ENCODE measurements at regions of chr11 and their contacts with region 1.

Region 1: GRCh38 chr11:60899046-60899936 is 7.1 kb downstream of the PRPF19 start:
- DNase-seq: peak; percentile 51
- ATAC-seq: peak; percentile 95
- H3K4me3 ChIP-seq: no peak overlapping the region
- H3K27ac ChIP-seq: no peak overlapping the region; the same call in 1 of the 2 replicates
- H3K4me1 ChIP-seq: peaks cover 0 to 3% of the 10 kb centered on the region in 2 experiments; a peak in 1 of 4 replicates
- H3K27me3 ChIP-seq: no peaks in the 10 kb centered on the region
- CTCF ChIP-seq: peak; percentile 67 to 93 (median 93); a peak in 5 of 6 replicates
- POLR2A ChIP-seq: no peak
- RAD21 ChIP-seq: peak; percentile 52; the same call in 1 of the 2 replicates

Region 2: GRCh38 chr11:60887556-60887955 is 11.7 kb before region 1 on chr11:
- CTCF ChIA-PET with region 1: interaction called, 26 read pairs
- POLR2A ChIA-PET with region 1: no interaction called
- RAD21 ChIA-PET with region 1: no interaction called
- intact Hi-C with region 1: no loop called
- DNase-seq: peak; percentile 31
- ATAC-seq: peak; percentile 95
- H3K4me3 ChIP-seq: no peak overlapping the region
- H3K27ac ChIP-seq: no peak overlapping the region
- H3K4me1 ChIP-seq: no peaks in the 10 kb centered on the region
- H3K27me3 ChIP-seq: no peaks in the 10 kb centered on the region
- CTCF ChIP-seq: peak; percentile 61; a peak in 5 of 6 replicates
- POLR2A ChIP-seq: no peak
- RAD21 ChIP-seq: peak; percentile 78

Region 3: DNA sequence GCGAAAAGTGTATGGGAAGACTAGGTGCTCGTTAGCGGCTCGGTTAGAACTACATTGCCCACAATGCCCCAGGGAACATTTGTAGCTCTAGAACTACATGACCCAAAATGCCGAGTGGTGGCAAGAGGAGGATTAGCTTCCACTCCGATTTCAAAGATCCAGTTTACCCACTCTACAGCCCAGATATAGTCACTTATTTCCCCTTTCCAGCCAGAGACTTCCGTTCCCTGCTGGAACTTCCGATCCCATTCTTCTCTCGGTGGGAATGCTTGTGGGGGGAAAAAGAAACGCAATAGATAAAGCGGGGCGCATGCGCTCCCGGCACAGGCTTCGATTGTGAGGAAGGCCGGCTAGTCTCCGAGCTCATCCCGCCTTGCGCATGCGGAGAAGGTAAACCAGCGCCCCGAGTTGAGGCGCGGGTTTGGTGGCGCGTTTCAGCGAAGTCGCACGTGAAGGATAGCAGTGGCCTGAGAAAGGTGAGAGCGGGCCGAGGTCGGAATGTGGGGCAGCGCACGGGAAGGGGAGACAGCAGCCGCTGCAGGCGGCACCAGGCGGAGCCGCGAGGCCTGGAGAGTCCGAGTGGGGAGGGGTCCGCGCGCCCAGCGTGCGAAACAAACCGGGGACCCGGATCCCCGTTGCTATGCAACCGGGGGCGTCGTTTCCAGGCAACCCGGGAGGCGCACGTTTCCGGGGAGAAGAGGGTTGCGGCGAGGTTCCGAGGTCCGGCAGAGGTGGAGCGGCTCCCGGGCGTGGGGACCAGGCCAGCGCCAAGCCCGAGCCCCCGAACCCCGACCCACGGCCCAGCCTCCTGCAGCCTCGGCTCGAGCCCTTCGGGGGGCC is 14.7 kb after region 1 on chr11 and contains the start of gene TMEM109:
- CTCF ChIA-PET with region 1: interaction called, 16 read pairs
- POLR2A ChIA-PET with region 1: no interaction called
- RAD21 ChIA-PET with region 1: no interaction called
- intact Hi-C with region 1: no loop called
- DNase-seq: peak; percentile 73
- ATAC-seq: peak; percentile 77
- H3K4me3 ChIP-seq: peak within 1 kb of the TSS; percentile 61 to 67
- H3K27ac ChIP-seq: peak within 1 kb of the TSS; percentile 61
- H3K4me1 ChIP-seq: peaks cover 23 to 60% of the 10 kb centered on the region in 2 experiments
- H3K27me3 ChIP-seq: no peaks in the 10 kb centered on the region
- CTCF ChIP-seq: no peak
- POLR2A ChIP-seq: peak; percentile 44
- RAD21 ChIP-seq: no peak
- total RNA-seq, gene TMEM109: 44.4 TPM

Region 4: DNA sequence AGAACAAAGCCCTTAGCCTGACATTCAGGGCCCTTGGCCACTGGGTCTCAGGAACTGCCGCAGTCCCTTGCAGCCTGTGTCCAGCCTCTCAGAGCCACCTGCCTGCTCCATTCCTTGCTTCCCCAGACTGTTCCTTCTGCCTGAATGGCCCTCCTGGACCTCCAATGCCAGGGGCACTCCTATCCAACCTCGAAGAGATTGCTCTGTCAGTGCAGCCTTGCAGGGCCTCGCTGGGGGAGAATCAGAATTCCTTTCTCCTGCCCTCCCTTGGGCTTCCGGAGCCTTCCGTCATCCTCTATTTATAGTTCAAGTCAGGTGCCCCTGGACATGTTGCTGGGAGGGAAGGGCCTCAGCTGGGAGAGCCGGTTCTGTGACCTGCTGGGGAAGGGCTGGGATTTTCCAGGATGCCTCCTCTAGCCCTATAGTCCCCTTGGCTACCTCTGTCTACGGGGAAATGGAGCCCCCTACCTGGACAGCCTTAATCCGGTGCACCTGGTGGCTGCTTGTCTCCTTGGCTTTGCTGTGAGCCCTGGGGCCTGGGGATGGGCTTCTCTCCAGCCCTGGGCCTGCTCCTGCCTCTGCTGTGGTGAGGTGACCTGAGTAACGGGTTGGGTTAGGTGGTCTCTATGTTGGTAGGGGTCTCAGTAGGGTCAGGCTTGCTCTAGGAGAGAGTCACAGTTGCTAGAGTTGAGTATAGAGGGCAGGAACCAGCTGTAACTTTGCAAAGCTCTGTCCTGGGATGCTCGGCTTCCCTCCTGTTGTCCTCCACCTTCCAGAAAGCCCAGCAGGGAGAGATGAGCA is 727.5 kb after region 1 on chr11:
- CTCF ChIA-PET with region 1: no interaction called
- POLR2A ChIA-PET with region 1: no interaction called
- RAD21 ChIA-PET with region 1: no interaction called
- intact Hi-C with region 1: no loop called
- DNase-seq: no peak
- ATAC-seq: peak; percentile 48
- H3K4me3 ChIP-seq: peak overlapping the region in 1 of 2 experiments; percentile 26; a peak in 2 of 4 replicates
- H3K27ac ChIP-seq: peak overlapping the region; percentile 68
- H3K4me1 ChIP-seq: peaks cover 33 to 53% of the 10 kb centered on the region in 2 experiments
- H3K27me3 ChIP-seq: no peaks in the 10 kb centered on the region
- CTCF ChIP-seq: peak in 2 of 3 experiments; percentile 14 to 54; a peak in 2 of 6 replicates
- POLR2A ChIP-seq: no peak
- RAD21 ChIP-seq: peak; percentile 78

Measured in HCT116 (cell line).